Pancreas (tissue), 10 donors: ENCODE measurements at regions of chr16 and their contacts with region 1.

Region 1: GRCh38 chr16:4330277-4330874 is 14.5 kb downstream of the GLIS2 start:
- DNase-seq: peak; percentile 69 to 96 (median 86)
- ATAC-seq: peak; percentile 65 to 79 (median 76)
- H3K4me3 ChIP-seq: no peak overlapping the region
- H3K27ac ChIP-seq: no peak overlapping the region
- H3K4me1 ChIP-seq: peaks cover 0 to 14% (median 6%) of the 10 kb centered on the region in 3 donors
- H3K27me3 ChIP-seq: no peaks in the 10 kb centered on the region
- CTCF ChIP-seq: peak; percentile 84 to 97 (median 92)

Region 2: DNA sequence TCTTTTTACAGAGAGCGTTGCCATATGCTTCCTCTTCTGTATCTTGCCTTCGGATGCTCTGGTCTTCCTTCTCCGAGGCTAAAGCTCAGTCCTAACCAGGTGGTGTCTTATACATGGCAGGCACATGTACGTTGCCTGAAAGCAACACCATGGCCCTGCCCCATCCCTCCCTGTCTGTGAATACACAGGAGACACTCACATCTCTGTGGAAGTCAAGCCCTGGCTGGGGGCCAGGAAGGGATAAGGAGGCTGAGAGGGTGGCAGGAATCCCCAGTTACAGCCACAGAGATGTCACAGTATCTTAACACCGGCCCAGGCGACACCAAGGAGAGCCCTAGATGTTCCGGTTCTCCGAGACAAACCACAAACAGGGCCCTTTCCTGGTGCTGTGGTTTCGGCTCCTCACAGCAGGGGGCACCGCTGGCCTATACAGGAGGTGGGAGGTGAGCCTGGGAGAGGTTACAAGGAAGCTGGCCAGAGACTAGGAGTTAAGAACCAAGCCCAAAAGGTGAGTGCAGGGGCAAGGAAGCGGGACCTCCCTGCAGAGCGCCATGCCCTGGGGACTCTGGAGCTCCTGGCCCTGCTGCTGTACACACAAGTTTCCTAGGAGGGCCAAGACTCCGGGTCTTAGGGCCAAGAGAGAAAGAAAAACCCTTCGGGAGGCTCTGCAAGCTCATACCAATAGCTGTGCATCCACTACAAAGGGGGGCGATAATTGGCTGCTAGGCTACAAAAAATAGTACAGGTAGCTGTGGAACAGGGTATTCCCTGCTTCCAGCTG is 130.2 kb before region 1 on chr16:
- intact Hi-C with region 1: loop called in 2 of 3 experiments (anchors 5 kb)
- DNase-seq: peak; percentile 60 to 88 (median 77)
- ATAC-seq: peak; percentile 87 to 100 (median 98)
- H3K4me3 ChIP-seq: no peak overlapping the region
- H3K27ac ChIP-seq: no peak overlapping the region
- H3K4me1 ChIP-seq: peaks cover 0 to 3% (median 0%) of the 10 kb centered on the region in 3 donors
- H3K27me3 ChIP-seq: no peaks in the 10 kb centered on the region
- CTCF ChIP-seq: peak; percentile 16 to 66 (median 54)

Region 3: DNA sequence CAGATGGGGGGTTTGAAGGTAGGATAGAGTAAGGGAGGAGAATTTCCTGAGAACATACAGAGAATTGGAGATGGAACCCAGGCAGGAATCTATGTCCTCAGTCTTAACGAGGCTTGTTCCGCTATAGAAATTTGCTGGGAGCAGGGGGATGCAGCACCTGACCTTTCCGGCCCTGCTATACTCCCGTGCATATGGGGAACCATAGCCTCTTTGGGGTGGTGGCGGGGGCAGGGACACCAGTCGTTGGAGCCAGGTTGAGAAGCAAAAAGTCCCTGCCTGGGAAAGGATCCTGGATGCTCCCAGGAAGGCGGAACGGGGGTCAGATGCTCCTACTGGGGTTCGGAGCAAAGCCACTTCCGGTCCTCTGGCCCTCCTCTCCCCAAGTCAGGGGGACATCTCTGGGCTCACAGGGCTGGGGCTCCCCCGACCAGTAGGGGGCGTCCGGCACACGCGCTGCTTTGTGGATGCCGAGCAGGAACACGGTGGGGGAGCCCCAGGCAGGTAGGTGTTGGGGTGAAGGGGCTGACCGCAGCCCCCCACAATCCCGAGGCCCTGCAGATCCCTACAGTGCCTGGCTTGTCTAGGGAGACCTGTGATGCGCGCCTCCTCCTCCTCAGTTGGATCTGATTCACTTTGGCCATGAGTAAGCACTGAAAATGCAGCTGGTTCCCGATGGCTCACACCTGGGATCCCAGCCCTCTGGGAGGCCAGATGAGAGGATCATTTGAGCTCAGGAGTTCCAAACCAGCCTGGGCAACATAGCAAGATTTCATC is 42.0 kb before region 1 on chr16:
- intact Hi-C with region 1: loop called (anchors 2 to 10 kb)
- DNase-seq: peak; percentile 62 to 95 (median 80)
- ATAC-seq: peak; percentile 86 to 96 (median 92)
- H3K4me3 ChIP-seq: no peak overlapping the region
- H3K27ac ChIP-seq: no peak overlapping the region
- H3K4me1 ChIP-seq: peaks cover 0 to 3% (median 0%) of the 10 kb centered on the region in 3 donors
- H3K27me3 ChIP-seq: no peaks in the 10 kb centered on the region
- CTCF ChIP-seq: peak; percentile 85 to 94 (median 90)

Region 4: GRCh38 chr16:4529085-4530060 is 199.0 kb after region 1 on chr16:
- intact Hi-C with region 1: no loop called
- DNase-seq: peak in 3 of 6 donors; percentile 45 to 65 (median 47)
- ATAC-seq: peak; percentile 52 to 78 (median 73)
- H3K4me3 ChIP-seq: peak overlapping the region in 1 of 4 donors; percentile 4
- H3K27ac ChIP-seq: peak overlapping the region; percentile 28 to 86 (median 72)
- H3K4me1 ChIP-seq: peaks cover 18 to 27% (median 22%) of the 10 kb centered on the region in 3 donors
- H3K27me3 ChIP-seq: no peaks in the 10 kb centered on the region
- CTCF ChIP-seq: no peak